ENCODE measurements at regions of chr17 and their contacts with region 1.

Region 1: GRCh38 chr17:60750640-60751039 is 73.0 kb downstream of the BCAS3 start:
- DNase-seq: no peak
- ATAC-seq: no peak
- H3K4me3 ChIP-seq: no peak overlapping the region
- H3K4me3 Mint-ChIP-seq: no peak overlapping the region
- H3K27ac ChIP-seq: no peak overlapping the region
- H3K27ac Mint-ChIP-seq: no peak overlapping the region
- H3K4me1 ChIP-seq: no peaks in the 10 kb centered on the region
- H3K4me1 Mint-ChIP-seq: peaks cover 0 to 3% (median 3%) of the 10 kb centered on the region in 3 donors
- H3K27me3 ChIP-seq: no peaks in the 10 kb centered on the region
- H3K27me3 Mint-ChIP-seq: no peaks in the 10 kb centered on the region

Region 2: DNA sequence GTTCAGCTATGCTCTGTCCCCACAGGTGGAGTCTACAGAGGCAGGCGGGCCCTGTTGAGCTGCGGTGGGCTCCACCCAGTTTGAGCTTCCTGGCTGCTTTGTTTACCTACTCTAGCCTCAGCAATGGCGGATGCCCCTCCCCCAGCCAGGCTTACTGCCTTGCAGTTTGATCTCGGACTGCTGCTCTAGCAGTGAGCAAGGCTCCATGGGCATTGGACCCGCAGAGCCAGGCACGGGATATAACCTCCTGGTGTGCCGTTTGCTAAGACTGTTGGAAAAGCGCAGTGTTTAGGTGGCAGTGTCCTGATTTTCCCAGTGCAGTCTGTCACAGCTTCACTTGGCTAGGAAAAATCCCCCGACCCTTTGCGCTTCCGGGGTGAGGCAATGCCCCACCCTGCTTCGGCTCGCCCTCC is 16.1 kb after region 1 on chr17:
- CTCF ChIA-PET with region 1: no interaction called
- POLR2A ChIA-PET with region 1: no interaction called
- DNase-seq: peak in 12 of 35 experiments; percentile 0 to 38 (median 9)
- ATAC-seq: peak in 1 of 4 experiments; percentile 16
- H3K4me3 ChIP-seq: no peak overlapping the region
- H3K4me3 Mint-ChIP-seq: peak overlapping the region in 1 of 3 donors; percentile 41
- H3K27ac ChIP-seq: no peak overlapping the region
- H3K27ac Mint-ChIP-seq: peak overlapping the region in 1 of 2 donors; percentile 76
- H3K4me1 ChIP-seq: peaks cover 0 to 19% of the 10 kb centered on the region in 2 experiments
- H3K4me1 Mint-ChIP-seq: peaks cover 36 to 39% (median 38%) of the 10 kb centered on the region in 3 donors
- H3K27me3 ChIP-seq: no peaks in the 10 kb centered on the region
- H3K27me3 Mint-ChIP-seq: no peaks in the 10 kb centered on the region

Region 3: GRCh38 chr17:60846175-60846574 is 95.5 kb after region 1 on chr17:
- CTCF ChIA-PET with region 1: no interaction called
- POLR2A ChIA-PET with region 1: no interaction called
- DNase-seq: no peak
- ATAC-seq: no peak
- H3K4me3 ChIP-seq: no peak overlapping the region
- H3K4me3 Mint-ChIP-seq: no peak overlapping the region
- H3K27ac ChIP-seq: no peak overlapping the region
- H3K27ac Mint-ChIP-seq: no peak overlapping the region
- H3K4me1 ChIP-seq: no peaks in the 10 kb centered on the region
- H3K4me1 Mint-ChIP-seq: no peaks in the 10 kb centered on the region
- H3K27me3 ChIP-seq: no peaks in the 10 kb centered on the region
- H3K27me3 Mint-ChIP-seq: no peaks in the 10 kb centered on the region

Region 4: GRCh38 chr17:61026818-61027217 is 276.2 kb after region 1 on chr17:
- CTCF ChIA-PET with region 1: no interaction called
- POLR2A ChIA-PET with region 1: interaction called in 1 of 2 experiments, 10 read pairs
- DNase-seq: no peak
- ATAC-seq: no peak
- H3K4me3 ChIP-seq: no peak overlapping the region
- H3K4me3 Mint-ChIP-seq: no peak overlapping the region
- H3K27ac ChIP-seq: no peak overlapping the region
- H3K27ac Mint-ChIP-seq: no peak overlapping the region
- H3K4me1 ChIP-seq: peaks cover 0 to 4% of the 10 kb centered on the region in 2 experiments
- H3K4me1 Mint-ChIP-seq: peaks cover 6 to 10% (median 6%) of the 10 kb centered on the region in 3 donors
- H3K27me3 ChIP-seq: no peaks in the 10 kb centered on the region
- H3K27me3 Mint-ChIP-seq: no peaks in the 10 kb centered on the region